H1 (cell line): ENCODE measurements at regions of chr4 and their contacts with region 1.

Region 1: GRCh38 chr4:180664766-180665368 is 1578.3 kb upstream of the TENM3 start:
- DNase-seq: peak; percentile 17 to 77
- H3K4me3 ChIP-seq: no peak overlapping the region
- H3K27ac ChIP-seq: no peak overlapping the region
- H3K4me1 ChIP-seq: peaks cover 0 to 4% (median 0%) of the 10 kb centered on the region in 4 experiments; a peak in 2 of 7 replicates
- H3K27me3 ChIP-seq: no peaks in the 10 kb centered on the region
- CTCF ChIP-seq: peak in 2 of 3 experiments; percentile 68 to 72; a peak in 2 of 4 replicates
- EP300 ChIP-seq: no peak
- POLR2A ChIP-seq: no peak
- RAD21 ChIP-seq: peak; percentile 84

Region 2: DNA sequence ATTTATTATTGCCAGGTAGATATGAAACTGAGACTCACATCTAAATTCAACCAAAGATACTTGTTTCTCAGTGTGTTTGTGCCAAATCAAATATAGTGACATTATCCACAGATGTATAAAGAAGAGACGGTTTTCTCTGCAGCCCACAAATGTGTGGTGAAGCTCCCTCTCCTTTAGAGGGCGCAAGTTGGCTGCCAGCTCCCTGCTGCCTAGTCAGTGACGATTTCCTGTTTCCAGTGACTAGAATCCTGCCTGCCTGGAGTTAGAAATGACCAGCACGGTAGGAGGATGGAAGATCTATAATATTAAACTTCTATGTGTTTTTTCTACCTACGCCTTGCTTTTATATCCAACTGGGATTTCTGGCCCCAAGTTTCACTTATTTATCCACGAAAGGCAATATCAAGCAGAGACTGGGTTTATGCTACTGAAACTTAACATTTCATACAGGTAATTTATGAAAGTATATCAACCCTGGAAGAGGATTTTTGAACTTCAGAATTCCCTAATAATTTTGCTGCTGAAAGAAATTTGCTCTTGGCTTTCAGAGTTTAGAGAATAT is 215.4 kb before region 1 on chr4:
- CTCF ChIA-PET with region 1: interaction called, 29 read pairs
- POLR2A ChIA-PET with region 1: no interaction called
- DNase-seq: peak in 1 of 2 experiments; percentile 7
- H3K4me3 ChIP-seq: no peak overlapping the region; a peak in 1 of 8 replicates
- H3K27ac ChIP-seq: no peak overlapping the region
- H3K4me1 ChIP-seq: no peaks in the 10 kb centered on the region
- H3K27me3 ChIP-seq: no peaks in the 10 kb centered on the region
- CTCF ChIP-seq: peak; percentile 76 to 90 (median 82)
- EP300 ChIP-seq: no peak
- POLR2A ChIP-seq: no peak
- RAD21 ChIP-seq: peak; percentile 88 to 91

Region 3: DNA sequence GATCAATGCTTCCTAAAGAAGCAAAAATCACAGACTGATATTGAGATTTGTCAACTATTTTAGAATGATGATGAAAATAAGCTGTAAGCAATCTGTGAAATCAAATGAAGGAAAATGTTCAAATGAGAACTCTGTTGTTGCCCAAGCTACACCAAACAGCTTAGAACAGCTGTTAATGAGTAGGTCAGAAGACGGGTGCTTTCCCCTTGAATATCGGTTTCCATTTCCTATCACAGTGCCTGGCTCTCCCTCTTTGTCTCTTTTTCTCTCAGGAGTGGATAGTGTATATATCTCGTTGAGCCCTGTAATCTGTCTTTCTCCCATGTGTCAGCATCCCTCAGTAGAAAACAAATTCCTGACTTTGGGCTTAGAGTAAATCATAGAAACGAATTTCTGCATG is 14.6 kb before region 1 on chr4:
- CTCF ChIA-PET with region 1: interaction called, 44 read pairs
- POLR2A ChIA-PET with region 1: no interaction called
- DNase-seq: no peak
- H3K4me3 ChIP-seq: no peak overlapping the region
- H3K27ac ChIP-seq: no peak overlapping the region
- H3K4me1 ChIP-seq: no peaks in the 10 kb centered on the region
- H3K27me3 ChIP-seq: no peaks in the 10 kb centered on the region
- CTCF ChIP-seq: no peak
- EP300 ChIP-seq: no peak
- POLR2A ChIP-seq: no peak
- RAD21 ChIP-seq: no peak

Region 4: DNA sequence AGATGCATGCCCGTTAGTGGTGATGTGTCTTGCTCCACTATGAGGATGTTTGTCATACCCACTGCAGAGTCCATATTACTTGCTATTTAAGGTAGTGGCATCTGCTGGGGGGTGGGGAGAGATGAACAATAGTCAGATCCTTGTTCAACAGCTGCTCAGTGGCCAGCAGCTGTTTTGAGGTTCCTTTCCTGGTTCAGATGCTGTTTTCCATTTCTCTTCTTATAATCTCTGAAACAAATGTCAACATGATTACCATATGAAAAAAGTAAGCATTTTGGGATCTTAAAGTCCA is 10.4 kb after region 1 on chr4:
- CTCF ChIA-PET with region 1: interaction called, 50 read pairs
- POLR2A ChIA-PET with region 1: no interaction called
- DNase-seq: no peak
- H3K4me3 ChIP-seq: no peak overlapping the region
- H3K27ac ChIP-seq: no peak overlapping the region
- H3K4me1 ChIP-seq: 0 out of 7 replicates have a peak, but pooled peaks cover 0 to 2% (median 0%) of the 10 kb centered on the region in 4 experiments
- H3K27me3 ChIP-seq: no peaks in the 10 kb centered on the region
- CTCF ChIP-seq: no peak
- EP300 ChIP-seq: no peak
- POLR2A ChIP-seq: no peak
- RAD21 ChIP-seq: no peak

Region 5: DNA sequence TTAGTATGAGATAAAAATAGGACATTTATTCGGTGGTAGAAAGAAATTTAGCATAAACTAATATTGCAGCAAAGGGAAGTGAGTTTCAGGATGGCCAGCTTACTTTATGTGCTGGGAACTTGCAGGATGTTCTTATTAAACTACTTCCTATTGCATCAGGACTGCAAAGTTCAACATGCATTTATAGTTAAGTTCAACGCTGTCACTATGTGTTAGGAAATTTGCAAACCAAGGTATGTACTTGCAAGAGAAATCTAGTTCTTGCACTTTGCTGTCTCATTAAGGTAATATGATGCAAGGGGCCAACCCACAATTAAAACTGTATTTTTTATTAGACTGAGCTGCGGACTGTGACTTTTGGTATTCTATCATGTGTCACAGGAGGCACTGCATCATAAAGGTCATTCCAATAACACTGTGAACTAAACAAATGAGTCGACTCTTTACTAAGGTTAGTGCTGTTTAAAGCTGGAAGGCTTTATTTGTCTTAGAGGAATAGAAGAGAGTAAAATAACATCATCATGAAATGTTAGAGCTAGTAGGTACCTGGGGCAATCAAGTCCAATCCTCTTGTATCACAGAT is 52.7 kb after region 1 on chr4:
- CTCF ChIA-PET with region 1: interaction called, 12 read pairs
- POLR2A ChIA-PET with region 1: no interaction called
- DNase-seq: no peak
- H3K4me3 ChIP-seq: no peak overlapping the region
- H3K27ac ChIP-seq: no peak overlapping the region
- H3K4me1 ChIP-seq: peaks cover 0 to 3% (median 0%) of the 10 kb centered on the region in 4 experiments; a peak in 1 of 7 replicates
- H3K27me3 ChIP-seq: no peaks in the 10 kb centered on the region
- CTCF ChIP-seq: no peak
- EP300 ChIP-seq: no peak
- POLR2A ChIP-seq: no peak
- RAD21 ChIP-seq: no peak